K562 (cell line): ENCODE measurements at regions of chr7 and their contacts with region 1.

Region 1: GRCh38 chr7:93245525-93246432 is 13.6 kb downstream of the VPS50 start:
- DNase-seq: peak in 3 of 4 experiments; percentile 17 to 38 (median 22)
- ATAC-seq: no peak
- H3K4me3 ChIP-seq: no peak overlapping the region
- H3K27ac ChIP-seq: no peak overlapping the region
- H3K4me1 ChIP-seq: no peaks in the 10 kb centered on the region; a peak in 1 of 5 replicates
- H3K27me3 ChIP-seq: no peaks in the 10 kb centered on the region
- CTCF ChIP-seq: peak in 2 of 3 experiments; percentile 43 to 81; a peak in 4 of 6 replicates
- EP300 ChIP-seq: no peak
- POLR2A ChIP-seq: no peak
- RAD21 ChIP-seq: peak; percentile 77 to 89

Region 2: DNA sequence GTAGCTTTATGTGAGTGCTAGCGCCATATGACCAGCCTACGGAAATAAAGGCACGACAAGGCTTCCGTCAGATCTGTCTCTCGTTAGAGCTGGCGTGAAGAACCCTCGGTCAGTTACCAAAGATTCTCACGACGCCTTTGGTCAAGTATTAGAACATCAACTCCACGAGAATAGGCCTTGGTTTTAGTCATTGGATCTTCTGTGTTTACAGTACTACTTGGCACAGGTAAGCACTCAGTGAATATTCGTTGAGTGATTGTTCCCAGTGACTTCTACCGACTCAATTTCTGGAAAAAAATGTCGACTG is 716.9 kb before region 1 on chr7:
- CTCF ChIA-PET with region 1: no interaction called
- POLR2A ChIA-PET with region 1: no interaction called
- in situ Hi-C with region 1: no loop called
- intact Hi-C with region 1: no loop called
- DNase-seq: no peak
- ATAC-seq: no peak; the same call in 2 of the 3 replicates
- H3K4me3 ChIP-seq: peak overlapping the region; percentile 84
- H3K27ac ChIP-seq: peak overlapping the region; percentile 98
- H3K4me1 ChIP-seq: peaks cover 7 to 10% of the 10 kb centered on the region in 2 experiments; a peak in 3 of 5 replicates
- H3K27me3 ChIP-seq: no peaks in the 10 kb centered on the region
- CTCF ChIP-seq: no peak
- EP300 ChIP-seq: no peak
- POLR2A ChIP-seq: no peak
- RAD21 ChIP-seq: no peak

Region 3: DNA sequence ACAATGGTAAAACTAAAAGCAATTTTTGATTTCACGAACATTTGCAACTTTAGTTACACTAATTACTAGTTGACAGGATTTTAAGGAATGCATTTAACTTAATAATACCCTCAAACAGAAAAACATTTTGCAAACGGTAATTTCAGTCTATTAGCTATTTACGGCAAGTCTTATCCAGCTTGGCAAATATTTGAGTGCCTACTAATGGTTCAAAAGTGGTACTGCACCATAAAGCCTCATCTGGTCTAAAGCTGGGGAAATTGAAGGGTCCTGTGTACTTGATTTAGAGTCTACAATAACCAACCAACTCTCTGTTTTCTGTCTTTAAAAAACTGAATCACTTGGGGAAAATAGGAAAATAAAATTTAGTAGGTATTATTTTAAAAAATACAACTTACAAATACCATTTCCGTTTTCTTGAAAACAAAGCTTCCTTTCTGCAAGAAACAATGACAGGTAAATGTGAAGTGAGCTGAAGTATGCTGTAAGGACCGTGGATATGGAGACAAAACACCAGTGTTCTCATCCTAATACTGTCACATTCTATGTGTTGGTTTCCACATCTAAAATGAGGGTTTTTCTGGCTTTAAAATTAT is 128.7 kb after region 1 on chr7:
- CTCF ChIA-PET with region 1: interaction called, 6 read pairs
- POLR2A ChIA-PET with region 1: no interaction called
- in situ Hi-C with region 1: no loop called
- intact Hi-C with region 1: loop called (anchors 1 kb)
- DNase-seq: peak; percentile 17 to 44 (median 26)
- ATAC-seq: peak; percentile 92
- H3K4me3 ChIP-seq: no peak overlapping the region
- H3K27ac ChIP-seq: no peak overlapping the region
- H3K4me1 ChIP-seq: no peaks in the 10 kb centered on the region
- H3K27me3 ChIP-seq: no peaks in the 10 kb centered on the region
- CTCF ChIP-seq: peak; percentile 38 to 81 (median 80); a peak in 5 of 6 replicates
- EP300 ChIP-seq: no peak
- POLR2A ChIP-seq: no peak
- RAD21 ChIP-seq: peak; percentile 58 to 80

Region 4: GRCh38 chr7:93442478-93443224 is 196.9 kb after region 1 on chr7:
- CTCF ChIA-PET with region 1: no interaction called
- POLR2A ChIA-PET with region 1: no interaction called
- in situ Hi-C with region 1: no loop called
- intact Hi-C with region 1: loop called (anchors 5 kb)
- DNase-seq: peak; percentile 57 to 69 (median 65)
- ATAC-seq: peak; percentile 94
- H3K4me3 ChIP-seq: no peak overlapping the region
- H3K27ac ChIP-seq: no peak overlapping the region
- H3K4me1 ChIP-seq: no peaks in the 10 kb centered on the region
- H3K27me3 ChIP-seq: no peaks in the 10 kb centered on the region
- CTCF ChIP-seq: peak; percentile 71 to 88 (median 77)
- EP300 ChIP-seq: no peak
- POLR2A ChIP-seq: no peak
- RAD21 ChIP-seq: peak; percentile 60 to 65

Region 5: DNA sequence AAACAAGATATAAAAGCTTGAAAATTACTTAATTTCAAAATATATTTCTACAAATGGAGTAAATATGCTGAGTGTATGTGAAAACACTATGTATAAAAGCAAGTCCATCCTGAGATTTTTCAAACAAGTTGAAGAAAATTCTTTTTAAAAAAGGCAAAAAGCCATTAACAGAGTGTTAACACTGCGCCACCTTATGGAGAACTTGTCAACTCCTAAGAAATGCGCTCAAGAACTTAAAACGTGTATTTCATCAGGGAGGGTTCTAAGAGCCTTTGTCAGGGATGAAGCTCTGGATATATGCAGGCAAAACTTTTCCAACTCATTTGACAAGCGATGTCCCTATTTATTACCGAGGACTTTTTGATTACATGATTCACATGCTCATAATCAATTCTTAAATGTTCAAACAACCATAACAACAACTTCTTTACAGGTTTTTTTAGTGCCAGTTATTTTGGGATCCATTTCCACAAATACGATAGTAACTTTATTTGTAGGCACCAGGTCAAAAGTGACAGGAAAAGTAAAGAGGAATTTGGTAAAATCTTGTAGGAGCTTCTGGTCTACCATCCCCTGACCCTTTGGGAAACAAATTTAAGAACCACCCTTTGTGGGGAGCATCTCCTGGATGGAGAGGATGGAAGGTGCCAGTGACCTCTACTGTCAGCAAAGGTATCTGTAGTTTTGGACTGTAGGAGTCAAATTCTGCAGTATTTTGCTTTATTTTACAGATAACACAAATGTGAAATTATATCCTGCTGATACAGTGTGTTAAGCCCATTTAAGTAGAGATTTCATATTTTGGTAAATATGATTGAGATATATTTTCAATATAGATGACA is 305.5 kb after region 1 on chr7:
- CTCF ChIA-PET with region 1: interaction called, 18 read pairs
- POLR2A ChIA-PET with region 1: no interaction called
- in situ Hi-C with region 1: no loop called
- intact Hi-C with region 1: loop called (anchors 1 kb)
- DNase-seq: peak in 3 of 4 experiments; percentile 15 to 62 (median 25)
- ATAC-seq: peak; percentile 91
- H3K4me3 ChIP-seq: no peak overlapping the region
- H3K27ac ChIP-seq: no peak overlapping the region
- H3K4me1 ChIP-seq: no peaks in the 10 kb centered on the region
- H3K27me3 ChIP-seq: 0 out of 5 replicates have a peak, but pooled peaks cover 3 to 4% of the 10 kb centered on the region in 2 experiments
- CTCF ChIP-seq: peak; percentile 56 to 73 (median 61); a peak in 5 of 6 replicates
- EP300 ChIP-seq: no peak
- POLR2A ChIP-seq: no peak
- RAD21 ChIP-seq: peak; percentile 56 to 69